Prostate gland (tissue), 2 donors: ENCODE measurements at regions of chr7 and their contacts with region 1.

Region 1: DNA sequence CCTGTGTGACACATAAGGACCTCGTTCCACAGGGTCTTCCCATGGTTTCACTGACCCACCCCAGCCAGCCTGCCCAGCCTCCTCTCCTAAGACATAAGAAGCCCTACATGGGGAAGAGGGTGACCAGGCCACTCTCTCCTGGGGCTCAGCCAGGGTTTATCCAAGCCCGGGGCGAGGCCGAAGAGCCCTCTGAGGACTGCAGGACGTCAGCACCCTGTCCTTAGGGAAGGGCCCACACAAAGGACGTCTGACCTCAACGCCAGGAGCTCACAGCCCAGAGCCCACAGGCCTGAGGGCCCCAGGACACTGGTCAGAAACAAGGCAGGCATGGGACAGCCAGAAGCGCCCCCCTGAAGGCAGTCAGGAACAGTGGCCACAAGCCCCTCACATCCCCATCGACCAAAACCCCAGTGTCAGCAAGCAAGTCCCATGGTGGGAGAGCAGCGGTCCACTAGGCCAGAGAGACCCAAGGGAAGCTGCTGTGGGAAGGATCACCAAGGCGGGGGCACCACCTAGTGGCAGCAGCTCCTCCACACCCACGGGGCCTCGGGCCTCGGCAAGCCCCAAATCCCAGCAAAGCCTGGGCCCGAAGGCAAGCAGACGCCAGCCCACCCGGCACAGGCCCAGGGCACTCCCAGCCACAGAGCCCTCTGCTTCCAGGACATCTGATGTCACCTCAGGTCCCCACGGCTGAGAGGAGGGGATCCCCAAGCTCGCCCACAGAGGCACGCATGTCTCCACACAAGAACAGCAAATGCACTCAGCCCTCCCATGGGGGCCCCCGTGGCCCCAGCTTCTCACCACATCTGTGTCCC is 23.4 kb downstream of the MAD1L1 start:
- DNase-seq: peak; percentile 61
- H3K4me3 ChIP-seq: no peak overlapping the region
- H3K27ac ChIP-seq: no peak overlapping the region
- H3K4me1 ChIP-seq: no peaks in the 10 kb centered on the region
- H3K27me3 ChIP-seq: no peaks in the 10 kb centered on the region
- CTCF ChIP-seq: peak; percentile 44 to 85 (median 68)
- POLR2A ChIP-seq: no peak

Region 2: GRCh38 chr7:1579481-1580421 is 629.6 kb before region 1 on chr7:
- intact Hi-C with region 1: loop called (anchors 2 kb)
- DNase-seq: peak; percentile 43
- H3K4me3 ChIP-seq: no peak overlapping the region
- H3K27ac ChIP-seq: no peak overlapping the region
- H3K4me1 ChIP-seq: no peaks in the 10 kb centered on the region
- H3K27me3 ChIP-seq: no peaks in the 10 kb centered on the region
- CTCF ChIP-seq: peak; percentile 39 to 79 (median 70)
- POLR2A ChIP-seq: no peak

Region 3: DNA sequence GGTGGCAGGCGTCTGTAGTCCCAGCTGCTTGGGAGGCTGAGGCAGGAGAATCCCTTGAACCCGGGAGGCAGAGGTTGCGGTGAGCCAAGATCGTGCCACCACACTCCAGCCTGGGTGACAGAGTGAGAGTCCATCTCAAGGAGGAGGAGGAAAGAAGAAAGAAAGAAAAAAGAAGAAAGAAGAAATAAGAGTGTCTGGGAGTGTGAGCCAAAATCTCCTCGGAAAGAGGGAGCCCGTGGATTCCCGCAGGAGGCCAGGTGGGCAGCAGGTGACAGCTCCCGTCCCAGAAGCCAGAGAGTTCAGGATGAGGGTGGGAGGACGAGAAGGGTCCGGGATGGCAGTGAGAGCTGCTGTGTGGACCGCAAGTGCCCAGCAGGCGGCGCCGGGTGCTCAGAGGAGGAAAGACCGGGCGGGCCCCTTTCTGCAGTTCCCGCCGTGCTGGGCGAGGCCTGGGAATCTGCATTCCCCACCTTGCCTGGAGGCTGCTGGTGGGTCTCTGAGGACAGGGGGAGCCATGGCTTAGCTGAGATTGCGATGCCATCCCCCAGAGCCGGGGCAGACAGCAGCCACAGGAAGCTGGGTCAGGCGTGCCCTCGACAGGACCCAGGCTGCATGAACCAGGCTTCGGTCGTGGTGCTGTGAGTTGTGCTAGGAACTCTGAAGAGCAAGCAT is 461.5 kb after region 1 on chr7:
- intact Hi-C with region 1: no loop called
- DNase-seq: peak; percentile 42
- H3K4me3 ChIP-seq: no peak overlapping the region
- H3K27ac ChIP-seq: no peak overlapping the region
- H3K4me1 ChIP-seq: no peaks in the 10 kb centered on the region
- H3K27me3 ChIP-seq: no peaks in the 10 kb centered on the region
- CTCF ChIP-seq: peak; percentile 57 to 79 (median 64)
- POLR2A ChIP-seq: no peak